GM12878 (cell line): ENCODE measurements at regions of chr14 and their contacts with region 1.

Region 1: GRCh38 chr14:24114536-24115450 is at the starts of genes DCAF11 and NRL:
- DNase-seq: peak; percentile 99
- ATAC-seq: peak; percentile 92
- H3K4me3 ChIP-seq: peak within 1 kb of the TSS; percentile 96
- H3K27ac ChIP-seq: peak within 1 kb of the TSS; percentile 94
- H3K4me1 ChIP-seq: peaks cover 5% of the 10 kb centered on the region
- H3K27me3 ChIP-seq: no peaks in the 10 kb centered on the region
- CTCF ChIP-seq: no peak
- EP300 ChIP-seq: no peak
- POLR2A ChIP-seq: peak; percentile 91
- RAD21 ChIP-seq: no peak
- polyA plus RNA-seq, gene DCAF11: 13.4 to 16.4 TPM
- polyA plus RNA-seq, gene NRL: 0.11 to 0.13 TPM

Region 2: DNA sequence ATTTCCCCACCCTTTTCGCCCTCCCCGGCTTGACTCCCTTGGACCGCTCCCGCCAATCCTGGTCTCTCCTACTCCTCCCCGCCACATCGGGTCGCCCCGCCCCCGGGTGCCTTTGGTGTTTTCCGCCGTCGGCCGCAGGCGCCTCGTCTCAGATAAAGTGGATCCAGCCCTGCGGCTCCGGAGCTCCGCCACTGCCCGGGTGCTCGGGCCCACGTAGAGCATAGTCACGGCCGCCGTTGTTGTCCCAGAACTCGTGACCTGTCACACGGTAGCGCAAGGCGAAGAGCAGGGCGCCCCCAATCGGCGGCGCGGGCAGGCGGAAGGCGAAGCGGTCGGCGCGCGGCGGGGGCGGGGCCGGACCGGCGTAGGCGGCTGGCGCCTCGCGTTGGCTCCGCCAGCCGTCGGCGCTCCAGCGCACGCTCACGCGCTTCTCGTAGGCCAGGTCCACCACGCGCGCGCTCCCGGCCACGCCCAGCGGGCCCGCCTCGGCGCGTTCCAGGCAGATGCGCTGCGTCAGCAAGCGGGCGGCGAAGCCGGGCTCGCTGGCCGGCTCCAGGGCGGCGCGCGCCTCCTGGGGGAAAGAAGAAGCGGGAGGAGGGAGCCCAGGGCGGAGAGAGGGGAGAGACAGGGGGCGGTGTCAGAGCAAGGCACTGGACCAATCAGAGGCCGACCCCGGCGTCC is 813.4 kb before region 1 on chr14:
- CTCF ChIA-PET with region 1: no interaction called
- POLR2A ChIA-PET with region 1: no interaction called
- RAD21 ChIA-PET with region 1: no interaction called
- SMC1A ChIA-PET with region 1: no interaction called
- in situ Hi-C with region 1: loop called (anchors 25 kb)
- intact Hi-C with region 1: no loop called
- DNase-seq: peak; percentile 91
- ATAC-seq: peak; percentile 90
- H3K4me3 ChIP-seq: peak overlapping the region; percentile 73
- H3K27ac ChIP-seq: peak overlapping the region; percentile 85
- H3K4me1 ChIP-seq: peaks cover 11% of the 10 kb centered on the region
- H3K27me3 ChIP-seq: no peaks in the 10 kb centered on the region
- CTCF ChIP-seq: peak; percentile 72 to 88 (median 73)
- EP300 ChIP-seq: peak; percentile 39; a peak in 1 of 4 replicates
- POLR2A ChIP-seq: peak; percentile 78
- RAD21 ChIP-seq: peak; percentile 43; the same call in 1 of the 2 replicates

Region 3: GRCh38 chr14:23776288-23776687 is 338.5 kb before region 1 on chr14:
- CTCF ChIA-PET with region 1: no interaction called
- POLR2A ChIA-PET with region 1: no interaction called
- RAD21 ChIA-PET with region 1: no interaction called
- SMC1A ChIA-PET with region 1: no interaction called
- in situ Hi-C with region 1: no loop called
- intact Hi-C with region 1: no loop called
- DNase-seq: no peak
- ATAC-seq: no peak
- H3K4me3 ChIP-seq: no peak overlapping the region
- H3K27ac ChIP-seq: no peak overlapping the region
- H3K4me1 ChIP-seq: no peaks in the 10 kb centered on the region
- H3K27me3 ChIP-seq: peaks cover 0 to 2% of the 10 kb centered on the region in 2 experiments; a peak in 2 of 4 replicates
- CTCF ChIP-seq: no peak
- EP300 ChIP-seq: no peak
- POLR2A ChIP-seq: no peak
- RAD21 ChIP-seq: no peak

Region 4: DNA sequence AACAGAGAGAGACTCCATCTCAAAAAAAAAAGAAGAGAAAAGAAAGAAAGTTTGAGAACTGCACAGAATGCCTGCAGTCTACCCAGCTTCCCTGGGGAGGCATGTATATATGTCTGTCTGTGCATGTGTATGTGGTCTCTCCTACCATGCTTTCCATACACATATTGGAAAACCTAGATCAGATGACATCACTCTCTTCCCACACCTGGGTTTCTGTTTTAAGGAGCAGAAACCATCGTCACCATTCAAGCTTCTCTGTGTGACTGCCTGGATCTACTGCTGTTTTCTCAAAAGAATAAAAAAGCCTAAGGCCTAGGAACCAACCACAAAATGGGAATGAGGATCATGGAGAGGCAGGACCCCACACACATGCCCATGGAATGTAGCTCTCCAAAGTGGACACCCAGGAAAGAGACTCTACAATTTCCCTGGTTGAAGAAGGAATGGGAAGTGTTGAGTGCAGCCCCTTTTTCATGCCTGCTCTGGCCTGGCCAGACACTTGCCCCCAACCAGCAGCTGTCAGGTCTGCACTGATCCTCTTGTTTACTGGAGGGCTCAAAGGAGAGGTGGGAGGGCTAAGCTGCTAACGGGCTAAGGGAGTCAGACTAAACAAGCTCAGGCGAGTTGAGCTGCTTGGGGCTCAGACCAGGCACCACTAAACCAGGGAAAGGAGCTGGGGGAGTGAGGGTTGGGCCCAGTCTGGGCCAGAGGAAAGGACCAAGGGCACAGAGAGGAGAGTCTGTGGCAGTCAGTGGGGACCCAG is 28.4 kb before region 1 on chr14:
- CTCF ChIA-PET with region 1: interaction called, 294 read pairs
- POLR2A ChIA-PET with region 1: interaction called, 79 read pairs
- RAD21 ChIA-PET with region 1: interaction called, 153 read pairs
- SMC1A ChIA-PET with region 1: interaction called, 195 read pairs
- in situ Hi-C with region 1: no loop called
- intact Hi-C with region 1: no loop called
- DNase-seq: no peak
- ATAC-seq: no peak
- H3K4me3 ChIP-seq: no peak overlapping the region
- H3K27ac ChIP-seq: no peak overlapping the region
- H3K4me1 ChIP-seq: 0 out of 2 replicates have a peak, but pooled peaks cover 3% of the 10 kb centered on the region
- H3K27me3 ChIP-seq: no peaks in the 10 kb centered on the region
- CTCF ChIP-seq: no peak
- EP300 ChIP-seq: no peak
- POLR2A ChIP-seq: no peak
- RAD21 ChIP-seq: no peak

Region 5: DNA sequence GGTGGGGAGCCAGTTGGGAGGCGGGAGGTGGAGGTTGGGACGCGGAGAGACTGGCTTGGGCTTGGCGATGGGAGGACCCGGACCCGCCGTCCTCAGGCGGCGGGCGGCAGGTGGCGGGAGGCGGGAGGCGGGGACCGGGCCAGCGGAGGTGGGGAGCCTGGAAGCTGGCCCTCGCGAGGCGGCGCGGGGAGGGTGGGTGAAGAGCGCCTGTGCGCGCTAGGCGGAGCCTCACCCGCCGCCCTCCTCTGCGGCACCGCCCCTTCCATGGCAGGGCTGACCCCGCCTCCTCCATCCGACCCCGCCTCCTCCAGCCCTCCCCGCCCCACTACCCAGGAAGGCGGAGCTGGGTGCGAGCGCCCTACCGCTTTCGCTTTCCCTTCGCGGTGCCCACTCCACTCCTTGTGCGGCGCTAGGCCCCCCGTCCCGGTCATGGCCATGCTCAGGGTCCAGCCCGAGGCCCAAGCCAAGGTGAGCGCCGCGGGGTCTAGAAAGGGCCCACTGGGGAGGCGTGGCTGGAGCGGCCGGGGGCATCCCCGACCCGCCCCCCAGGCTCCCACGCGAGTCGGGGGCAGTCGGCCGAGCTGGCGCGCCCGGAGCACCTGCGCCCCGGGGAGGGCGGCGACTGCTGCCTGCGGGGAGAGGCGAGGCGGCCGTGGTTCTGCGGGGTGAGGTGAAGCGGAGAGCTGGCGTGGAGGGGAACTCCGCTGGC is 21.2 kb after region 1 on chr14 and contains the start of gene PSME1:
- CTCF ChIA-PET with region 1: interaction called, 39 read pairs
- POLR2A ChIA-PET with region 1: interaction called, 276 read pairs
- RAD21 ChIA-PET with region 1: interaction called, 69 read pairs
- SMC1A ChIA-PET with region 1: interaction called, 70 read pairs
- in situ Hi-C with region 1: no loop called
- intact Hi-C with region 1: loop called (anchors 1 kb)
- DNase-seq: peak; percentile 75
- ATAC-seq: peak; percentile 94
- H3K4me3 ChIP-seq: peak within 1 kb of the TSS; percentile 99
- H3K27ac ChIP-seq: peak within 1 kb of the TSS; percentile 95
- H3K4me1 ChIP-seq: peaks cover 40% of the 10 kb centered on the region
- H3K27me3 ChIP-seq: no peaks in the 10 kb centered on the region
- CTCF ChIP-seq: no peak
- EP300 ChIP-seq: no peak
- POLR2A ChIP-seq: peak; percentile 86
- RAD21 ChIP-seq: no peak
- polyA plus RNA-seq, gene PSME1: 1,299 to 1,378 TPM

Region 6: GRCh38 chr14:24146978-24147760 is 32.4 kb after region 1 on chr14 and contains the start of gene RNF31:
- CTCF ChIA-PET with region 1: interaction called, 13 read pairs
- POLR2A ChIA-PET with region 1: interaction called, 84 read pairs
- RAD21 ChIA-PET with region 1: interaction called, 33 read pairs
- SMC1A ChIA-PET with region 1: interaction called, 32 read pairs
- in situ Hi-C with region 1: no loop called
- intact Hi-C with region 1: no loop called
- DNase-seq: peak; percentile 92
- ATAC-seq: peak; percentile 93
- H3K4me3 ChIP-seq: peak within 1 kb of the TSS; percentile 82
- H3K27ac ChIP-seq: peak within 1 kb of the TSS; percentile 94
- H3K4me1 ChIP-seq: peaks cover 11% of the 10 kb centered on the region
- H3K27me3 ChIP-seq: no peaks in the 10 kb centered on the region
- CTCF ChIP-seq: no peak
- EP300 ChIP-seq: no peak
- POLR2A ChIP-seq: peak; percentile 28
- RAD21 ChIP-seq: no peak
- polyA plus RNA-seq, gene RNF31: 8.5 to 19.0 TPM

Region 7: DNA sequence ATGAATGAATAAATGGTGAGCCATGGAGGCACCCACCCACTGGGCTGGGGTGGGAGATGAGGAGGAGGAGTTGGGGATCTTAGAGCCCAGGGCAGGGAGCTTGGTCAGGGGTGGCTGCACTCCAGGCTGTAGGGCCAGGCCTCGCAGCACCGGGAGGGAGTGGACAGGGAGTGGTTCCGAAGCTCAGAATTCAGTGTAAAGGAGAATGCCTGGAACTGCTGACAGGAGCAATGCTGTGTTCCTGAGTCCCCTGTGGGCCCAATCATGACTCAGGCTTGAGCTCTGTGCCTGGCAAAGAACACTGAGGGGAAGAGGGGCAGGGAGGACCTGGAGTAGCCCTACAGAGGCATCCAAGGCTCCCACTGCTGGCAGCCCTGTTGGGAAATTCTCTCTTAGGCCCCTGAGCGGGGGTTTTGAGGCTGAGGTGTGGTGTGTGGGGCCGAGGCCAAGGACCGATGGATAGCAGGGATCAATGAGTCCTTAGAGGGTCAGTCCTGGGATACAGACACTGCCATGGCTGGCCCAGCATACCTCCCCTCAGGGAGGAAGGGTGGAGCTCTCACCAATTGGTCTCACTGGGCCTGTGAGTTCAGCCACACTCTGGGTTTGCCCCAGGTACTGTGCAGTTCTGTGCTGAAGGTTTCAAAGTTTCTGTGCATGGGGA is 166.1 kb after region 1 on chr14:
- CTCF ChIA-PET with region 1: no interaction called
- POLR2A ChIA-PET with region 1: no interaction called
- RAD21 ChIA-PET with region 1: no interaction called
- SMC1A ChIA-PET with region 1: no interaction called
- in situ Hi-C with region 1: no loop called
- intact Hi-C with region 1: no loop called
- DNase-seq: no peak
- ATAC-seq: no peak
- H3K4me3 ChIP-seq: no peak overlapping the region
- H3K27ac ChIP-seq: no peak overlapping the region
- H3K4me1 ChIP-seq: peaks cover 36% of the 10 kb centered on the region
- H3K27me3 ChIP-seq: no peaks in the 10 kb centered on the region
- CTCF ChIP-seq: no peak
- EP300 ChIP-seq: no peak
- POLR2A ChIP-seq: no peak
- RAD21 ChIP-seq: no peak

Region 8: GRCh38 chr14:24442273-24443052 is 327.7 kb after region 1 on chr14 and contains the start of gene SDR39U1:
- CTCF ChIA-PET with region 1: no interaction called
- POLR2A ChIA-PET with region 1: no interaction called
- RAD21 ChIA-PET with region 1: no interaction called
- SMC1A ChIA-PET with region 1: no interaction called
- in situ Hi-C with region 1: no loop called
- intact Hi-C with region 1: loop called (anchors 1 kb)
- DNase-seq: peak; percentile 99
- ATAC-seq: peak; percentile 93
- H3K4me3 ChIP-seq: peak within 1 kb of the TSS; percentile 93
- H3K27ac ChIP-seq: peak within 1 kb of the TSS; percentile 96
- H3K4me1 ChIP-seq: peaks cover 6% of the 10 kb centered on the region
- H3K27me3 ChIP-seq: no peaks in the 10 kb centered on the region
- CTCF ChIP-seq: no peak
- EP300 ChIP-seq: no peak
- POLR2A ChIP-seq: peak; percentile 90
- RAD21 ChIP-seq: no peak
- polyA plus RNA-seq, gene SDR39U1: 14.0 to 26.4 TPM